Transverse colon (tissue), 4 donors: ENCODE measurements at regions of chr14 and their contacts with region 1.

Region 1: DNA sequence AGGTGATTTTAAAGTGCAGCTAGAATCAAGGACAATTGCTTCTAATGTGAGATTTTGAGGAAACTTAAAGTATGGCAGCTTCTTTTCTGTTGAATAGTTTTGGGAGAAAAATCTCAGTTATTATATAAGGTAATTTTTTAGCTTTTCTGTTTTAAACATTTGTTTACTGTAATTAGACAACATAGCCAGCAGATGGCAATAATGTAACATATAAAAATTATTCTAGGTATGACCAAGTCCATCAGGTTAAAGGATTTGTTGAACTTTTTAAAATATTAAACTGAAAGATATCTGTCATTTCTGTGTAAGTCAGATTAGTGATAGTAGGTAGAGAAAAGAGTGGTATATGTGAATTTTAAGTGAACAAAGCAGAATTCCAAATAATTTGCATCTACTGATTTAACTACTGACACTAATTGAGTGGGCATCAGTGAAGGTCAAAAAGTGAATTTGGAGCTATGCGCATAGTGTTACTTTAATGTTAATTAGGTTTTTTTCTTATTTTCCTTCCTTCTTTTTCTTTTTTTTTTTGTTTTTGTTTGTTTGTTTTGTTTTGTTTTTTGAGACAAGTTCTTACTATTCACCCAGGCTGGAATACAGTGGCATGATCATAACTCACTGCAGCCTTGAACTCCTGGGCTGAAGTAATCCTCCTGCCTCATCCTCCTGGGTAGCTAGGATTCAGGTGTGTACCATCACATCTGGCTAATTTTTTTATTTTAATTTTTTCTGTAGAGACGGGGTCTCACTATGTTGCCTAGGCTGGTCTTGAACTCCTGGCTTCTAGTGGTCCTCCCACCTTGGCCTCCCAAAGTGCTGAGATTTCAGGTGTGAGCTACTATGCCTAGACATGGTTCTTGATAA is 18.6 kb downstream of the PRORP start:
- DNase-seq: no peak
- H3K4me3 ChIP-seq: no peak overlapping the region
- H3K27ac ChIP-seq: no peak overlapping the region
- H3K4me1 ChIP-seq: no peaks in the 10 kb centered on the region
- H3K27me3 ChIP-seq: no peaks in the 10 kb centered on the region
- CTCF ChIP-seq: peak; percentile 34 to 63 (median 44)
- EP300 ChIP-seq: no peak
- POLR2A ChIP-seq: no peak

Region 2: GRCh38 chr14:35121887-35122695 is 18.9 kb before region 1 on chr14 and contains the starts of genes PPP2R3C and PRORP:
- in situ Hi-C with region 1: no loop called
- intact Hi-C with region 1: no loop called
- DNase-seq: peak; percentile 93
- H3K4me3 ChIP-seq: peak within 1 kb of the TSS; percentile 58 to 96 (median 61)
- H3K27ac ChIP-seq: peak within 1 kb of the TSS; percentile 92 to 99 (median 96)
- H3K4me1 ChIP-seq: peaks cover 5 to 51% (median 28%) of the 10 kb centered on the region in 4 donors
- H3K27me3 ChIP-seq: no peaks in the 10 kb centered on the region
- CTCF ChIP-seq: no peak
- EP300 ChIP-seq: peak; percentile 81
- POLR2A ChIP-seq: peak; percentile 59
- total RNA-seq, gene PPP2R3C: 13.5 to 26.5 (median 19.1) TPM
- total RNA-seq, gene PRORP: 23.2 to 46.0 (median 32.2) TPM

Region 3: DNA sequence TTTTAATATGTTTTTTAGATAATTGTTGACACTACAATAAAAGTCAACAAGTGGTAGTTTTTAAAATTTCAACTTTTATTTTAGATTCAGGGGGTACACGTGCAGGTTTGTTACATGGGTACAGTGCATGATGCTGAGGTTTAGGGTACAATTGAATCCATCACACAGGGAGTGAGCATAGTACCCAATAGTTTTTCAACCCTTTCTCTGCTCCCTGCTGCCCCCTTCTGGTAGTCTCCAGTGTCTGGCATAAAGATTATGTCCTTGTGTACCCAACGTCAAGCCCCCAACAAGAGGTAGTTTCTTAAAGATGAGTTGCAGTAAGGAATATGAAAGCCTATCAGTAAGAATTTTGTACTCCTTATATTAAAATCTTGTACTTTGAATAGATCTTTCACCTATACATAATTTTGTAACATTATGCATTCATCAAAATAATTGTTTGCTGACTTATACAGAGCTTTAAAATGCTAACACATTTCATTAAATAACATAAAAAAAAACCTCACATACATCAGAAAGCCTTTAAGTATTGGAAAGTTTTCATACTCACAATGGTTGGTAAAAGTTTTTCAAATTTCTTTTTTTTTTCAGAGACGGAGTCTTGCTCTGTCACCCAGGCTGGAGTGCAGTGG is 673.5 kb after region 1 on chr14:
- in situ Hi-C with region 1: loop called in 1 of 4 experiments (anchors 25 kb)
- intact Hi-C with region 1: no loop called
- DNase-seq: peak; percentile 77
- H3K4me3 ChIP-seq: no peak overlapping the region
- H3K27ac ChIP-seq: no peak overlapping the region
- H3K4me1 ChIP-seq: no peaks in the 10 kb centered on the region
- H3K27me3 ChIP-seq: no peaks in the 10 kb centered on the region
- CTCF ChIP-seq: peak; percentile 46 to 76 (median 74)
- EP300 ChIP-seq: no peak
- POLR2A ChIP-seq: no peak